AG04450 (cell line): ENCODE measurements at regions of chr3 and their contacts with region 1.

Region 1: GRCh38 chr3:139353920-139354556 is 10.2 kb downstream of the MRPS22 start:
- DNase-seq: peak; percentile 29
- H3K4me3 ChIP-seq: no peak overlapping the region
- H3K27ac ChIP-seq: no peak overlapping the region
- H3K27me3 ChIP-seq: no peaks in the 10 kb centered on the region
- CTCF ChIP-seq: peak; percentile 94

Region 2: GRCh38 chr3:138620431-138620830 is 733.6 kb before region 1 on chr3:
- CTCF ChIA-PET with region 1: no interaction called
- POLR2A ChIA-PET with region 1: no interaction called
- DNase-seq: no peak
- H3K4me3 ChIP-seq: no peak overlapping the region
- H3K27ac ChIP-seq: no peak overlapping the region
- H3K27me3 ChIP-seq: no peaks in the 10 kb centered on the region
- CTCF ChIP-seq: no peak

Region 3: GRCh38 chr3:138941259-138941885 is 412.7 kb before region 1 on chr3:
- CTCF ChIA-PET with region 1: interaction called, 14 read pairs
- POLR2A ChIA-PET with region 1: no interaction called
- DNase-seq: peak; percentile 11
- H3K4me3 ChIP-seq: no peak overlapping the region
- H3K27ac ChIP-seq: no peak overlapping the region
- H3K27me3 ChIP-seq: peaks cover 93% of the 10 kb centered on the region
- CTCF ChIP-seq: peak; percentile 70

Region 4: DNA sequence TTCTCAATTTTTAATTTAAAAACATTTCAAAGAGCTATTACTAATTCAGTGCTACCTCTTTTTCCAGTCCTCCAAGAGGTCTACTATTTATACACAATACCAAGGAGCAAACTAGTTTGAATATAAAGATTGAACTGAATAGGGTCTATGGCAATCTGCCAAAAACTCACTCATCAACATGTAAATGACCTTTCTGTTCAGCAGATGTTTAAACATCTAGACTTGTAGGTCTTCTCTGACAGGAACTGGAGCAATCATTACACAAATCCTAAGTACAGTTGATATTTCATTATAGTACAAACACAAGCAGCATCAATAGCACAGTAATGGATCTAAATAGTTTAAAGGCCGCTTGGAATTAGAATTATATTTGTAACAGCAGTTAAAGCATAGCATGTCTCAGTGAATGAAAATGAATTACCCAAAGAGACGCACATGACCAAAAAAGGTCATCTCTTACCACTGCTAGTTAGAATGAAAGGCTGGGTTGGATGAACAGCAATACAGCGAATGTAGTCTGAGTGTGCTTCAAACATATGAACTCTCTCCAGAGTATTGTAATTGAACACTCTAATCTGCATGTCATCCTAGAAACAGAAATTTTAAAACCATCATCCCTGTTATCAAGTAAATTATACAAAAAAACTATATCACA is 24.7 kb after region 1 on chr3:
- CTCF ChIA-PET with region 1: interaction called, 28 read pairs
- POLR2A ChIA-PET with region 1: interaction called, 3 read pairs
- DNase-seq: no peak
- H3K4me3 ChIP-seq: no peak overlapping the region
- H3K27ac ChIP-seq: no peak overlapping the region
- H3K27me3 ChIP-seq: no peaks in the 10 kb centered on the region
- CTCF ChIP-seq: no peak

Region 5: DNA sequence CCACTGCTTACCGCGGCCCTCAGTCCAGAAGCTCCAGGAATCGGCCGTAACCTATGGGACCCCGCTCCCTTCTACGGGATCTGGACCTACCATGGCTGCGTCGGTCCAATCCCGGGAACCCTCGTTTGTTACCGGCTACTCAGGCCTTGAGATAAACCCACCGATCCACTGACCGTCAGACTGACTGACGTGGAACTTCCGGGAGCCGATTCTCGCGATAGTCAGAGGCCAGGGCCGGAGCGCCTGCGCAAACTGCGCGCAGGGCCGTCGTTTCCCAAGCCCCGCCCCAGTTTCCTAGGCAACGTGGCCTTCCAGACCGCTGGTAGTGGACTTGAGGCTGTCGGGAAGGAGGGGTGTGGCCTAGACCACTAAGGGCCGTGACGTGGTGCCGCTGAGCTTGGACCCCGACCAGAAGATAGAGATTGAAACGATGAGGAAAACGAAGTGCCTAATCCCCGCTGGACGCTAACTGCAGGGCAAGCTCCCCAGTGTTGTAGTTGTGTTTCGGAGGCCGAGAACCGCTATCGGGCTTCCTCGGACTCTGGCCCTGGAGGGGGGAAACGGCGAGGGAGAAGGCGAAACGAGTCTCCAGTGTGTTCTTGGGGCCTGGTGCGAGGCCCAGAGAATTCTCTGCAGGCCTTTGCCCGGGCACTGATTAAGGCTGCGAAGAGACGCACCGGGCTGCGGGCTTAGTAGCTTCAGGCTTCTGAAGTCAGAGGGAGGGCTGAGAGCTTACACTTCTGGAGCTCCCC is 35.6 kb after region 1 on chr3 and contains the start of gene COPB2:
- CTCF ChIA-PET with region 1: interaction called, 16 read pairs
- POLR2A ChIA-PET with region 1: interaction called, 6 read pairs
- DNase-seq: peak; percentile 98
- H3K4me3 ChIP-seq: peak within 1 kb of the TSS; percentile 94
- H3K27ac ChIP-seq: peak within 1 kb of the TSS; percentile 98
- H3K27me3 ChIP-seq: no peaks in the 10 kb centered on the region
- CTCF ChIP-seq: no peak
- polyA plus RNA-seq, gene COPB2: 263 and 331 TPM in 2 replicates